Caco-2 (cell line): ENCODE measurements at regions of chr4 and their contacts with region 1.

Region 1: GRCh38 chr4:120922381-120923206 is at the start of gene PRDM5:
- DNase-seq: peak; percentile 66 to 73
- H3K4me3 ChIP-seq: peak within 1 kb of the TSS; percentile 81
- H3K4me3 Mint-ChIP-seq: peak within 1 kb of the TSS; percentile 80
- H3K27ac Mint-ChIP-seq: peak within 1 kb of the TSS; percentile 80
- H3K4me1 ChIP-seq: peaks cover 3% of the 10 kb centered on the region; the same call in 1 of the 2 replicates
- H3K4me1 Mint-ChIP-seq: no peaks in the 10 kb centered on the region
- H3K27me3 ChIP-seq: no peaks in the 10 kb centered on the region
- H3K27me3 Mint-ChIP-seq: no peaks in the 10 kb centered on the region
- CTCF ChIP-seq: peak in 1 of 2 experiments; percentile 23
- total RNA-seq, gene PRDM5: 13.0 and 14.3 TPM in 2 replicates

Region 2: DNA sequence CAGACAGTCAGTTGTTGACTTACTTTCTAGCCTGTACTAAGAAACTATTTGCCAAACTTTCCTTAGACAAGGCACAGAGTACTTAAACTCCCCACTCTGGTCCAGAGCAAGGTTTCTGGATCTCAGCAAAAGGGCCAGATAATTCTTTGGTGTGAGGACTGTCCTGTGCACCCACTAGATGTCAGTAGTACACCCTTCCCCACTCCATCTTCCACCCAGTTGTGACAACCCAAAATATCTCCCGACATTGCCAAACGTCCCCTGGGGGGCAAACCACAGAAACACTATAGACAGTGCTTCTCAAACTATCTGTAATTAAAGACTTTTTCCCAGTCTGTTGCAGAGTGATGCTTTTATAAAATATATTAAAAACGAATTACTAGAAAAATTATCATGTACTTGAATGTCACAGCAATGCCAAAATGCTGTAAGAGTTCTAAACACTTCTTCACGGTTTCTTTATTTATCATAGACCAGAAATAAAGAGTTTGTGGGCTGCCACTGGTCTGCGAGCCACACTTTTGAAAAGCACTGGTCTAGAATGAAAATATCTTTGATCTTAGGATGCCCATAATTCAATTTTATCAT is 203.5 kb before region 1 on chr4:
- CTCF ChIA-PET with region 1: no interaction called
- POLR2A ChIA-PET with region 1: no interaction called
- intact Hi-C with region 1: loop called (anchors 1 kb)
- DNase-seq: peak in 1 of 2 experiments; percentile 46
- H3K4me3 ChIP-seq: no peak overlapping the region
- H3K4me3 Mint-ChIP-seq: no peak overlapping the region
- H3K27ac Mint-ChIP-seq: no peak overlapping the region
- H3K4me1 ChIP-seq: no peaks in the 10 kb centered on the region
- H3K4me1 Mint-ChIP-seq: peaks cover 19% of the 10 kb centered on the region
- H3K27me3 ChIP-seq: no peaks in the 10 kb centered on the region
- H3K27me3 Mint-ChIP-seq: no peaks in the 10 kb centered on the region
- CTCF ChIP-seq: peak; percentile 61 to 73

Region 3: DNA sequence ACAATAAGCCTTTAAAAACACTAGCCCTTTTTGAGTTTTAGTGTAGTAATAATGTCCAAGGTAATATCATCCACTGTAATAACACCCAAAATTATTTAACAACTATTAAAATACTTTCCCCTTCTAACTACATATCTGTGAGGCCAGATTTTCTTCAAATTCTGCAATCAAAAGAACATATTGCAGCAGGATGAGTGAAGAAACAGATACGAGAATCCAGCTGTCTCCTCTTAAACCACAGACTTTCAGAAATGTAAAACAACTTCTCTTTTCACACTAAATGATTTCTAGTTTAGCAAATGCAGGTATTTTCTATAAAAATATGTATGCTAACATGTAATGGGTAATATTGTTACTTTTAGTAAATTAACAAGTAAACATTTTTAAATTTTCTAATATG is 149.0 kb before region 1 on chr4:
- CTCF ChIA-PET with region 1: no interaction called
- POLR2A ChIA-PET with region 1: no interaction called
- intact Hi-C with region 1: no loop called
- DNase-seq: no peak
- H3K4me3 ChIP-seq: no peak overlapping the region
- H3K4me3 Mint-ChIP-seq: no peak overlapping the region
- H3K27ac Mint-ChIP-seq: no peak overlapping the region
- H3K4me1 ChIP-seq: no peaks in the 10 kb centered on the region
- H3K4me1 Mint-ChIP-seq: peaks cover 6% of the 10 kb centered on the region
- H3K27me3 ChIP-seq: no peaks in the 10 kb centered on the region
- H3K27me3 Mint-ChIP-seq: no peaks in the 10 kb centered on the region
- CTCF ChIP-seq: no peak

Region 4: DNA sequence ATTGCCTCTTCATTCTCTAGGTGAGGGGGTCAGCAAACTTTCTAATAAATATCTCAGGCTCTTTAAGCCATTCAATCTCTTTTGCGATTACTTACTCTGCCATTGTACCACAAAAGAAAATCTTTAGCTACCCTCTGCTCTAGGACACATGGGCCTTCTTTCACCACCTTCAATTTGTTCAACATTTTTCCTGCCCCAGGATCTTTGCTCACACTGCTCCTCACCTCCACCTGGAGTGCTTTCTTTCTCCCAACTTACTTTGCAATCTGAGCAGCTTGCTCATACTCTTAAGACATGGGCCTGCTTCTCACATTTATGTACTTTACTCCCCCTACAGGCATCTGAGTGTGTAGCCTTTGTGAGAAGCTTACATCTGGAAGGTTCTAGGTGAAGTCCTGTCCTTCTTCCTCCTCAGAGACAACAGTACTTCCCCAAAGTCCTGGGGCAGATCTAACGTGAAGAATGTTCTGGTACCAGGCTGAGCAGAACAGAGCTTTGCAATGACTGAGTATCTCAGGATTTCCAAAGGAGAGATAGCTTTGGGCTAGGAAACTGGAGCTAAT is 54.9 kb after region 1 on chr4:
- CTCF ChIA-PET with region 1: no interaction called
- POLR2A ChIA-PET with region 1: no interaction called
- intact Hi-C with region 1: loop called (anchors 2 kb)
- DNase-seq: peak; percentile 39 to 46
- H3K4me3 ChIP-seq: no peak overlapping the region
- H3K4me3 Mint-ChIP-seq: no peak overlapping the region
- H3K27ac Mint-ChIP-seq: no peak overlapping the region
- H3K4me1 ChIP-seq: no peaks in the 10 kb centered on the region
- H3K4me1 Mint-ChIP-seq: no peaks in the 10 kb centered on the region
- H3K27me3 ChIP-seq: no peaks in the 10 kb centered on the region
- H3K27me3 Mint-ChIP-seq: no peaks in the 10 kb centered on the region
- CTCF ChIP-seq: peak; percentile 45 to 62

Region 5: DNA sequence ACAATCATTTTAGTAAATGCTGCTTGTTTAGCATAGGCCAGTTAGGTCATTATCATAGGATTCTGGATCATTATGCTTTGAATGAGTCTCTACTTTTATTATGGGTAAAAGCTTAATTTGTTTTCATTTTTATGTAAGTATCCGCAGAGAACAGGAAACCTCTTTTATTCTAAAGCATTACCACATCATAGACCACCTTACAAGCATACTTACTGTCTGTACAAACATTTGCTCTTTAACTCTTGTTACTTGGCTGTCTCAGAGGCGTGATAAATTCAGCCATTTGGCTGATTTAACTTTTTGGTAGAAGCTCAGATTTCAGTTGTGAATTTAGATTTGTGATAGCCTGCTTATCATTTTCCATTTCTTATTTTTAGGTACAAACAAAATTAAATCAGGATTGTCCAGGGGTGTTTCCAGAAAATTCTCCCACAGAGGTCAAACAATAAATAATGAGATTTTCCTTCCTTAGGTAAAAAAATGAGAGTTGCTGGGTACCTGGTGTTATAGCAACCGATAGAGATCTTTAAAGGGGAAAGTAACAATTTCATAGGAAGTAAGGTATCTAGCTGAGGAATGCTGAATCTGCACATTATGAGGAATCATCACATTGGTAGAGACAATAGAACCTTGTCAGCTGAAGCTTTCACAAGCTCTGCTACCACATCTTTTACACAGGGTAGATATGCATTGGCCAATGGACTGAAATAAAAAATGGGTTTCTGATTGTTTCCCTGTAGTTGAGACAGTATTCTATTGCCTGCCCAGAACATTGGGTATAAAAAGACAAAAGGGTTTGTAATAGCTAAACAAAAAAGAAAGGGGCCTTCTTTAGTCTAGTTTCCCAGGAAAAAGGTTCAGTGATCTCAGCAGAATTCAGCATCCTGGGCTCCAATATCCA is 87.2 kb after region 1 on chr4:
- CTCF ChIA-PET with region 1: no interaction called
- POLR2A ChIA-PET with region 1: no interaction called
- intact Hi-C with region 1: loop called (anchors 5 kb)
- DNase-seq: no peak
- H3K4me3 ChIP-seq: no peak overlapping the region
- H3K4me3 Mint-ChIP-seq: no peak overlapping the region
- H3K27ac Mint-ChIP-seq: no peak overlapping the region
- H3K4me1 ChIP-seq: peaks cover 6% of the 10 kb centered on the region; the same call in 1 of the 2 replicates
- H3K4me1 Mint-ChIP-seq: peaks cover 12% of the 10 kb centered on the region
- H3K27me3 ChIP-seq: no peaks in the 10 kb centered on the region
- H3K27me3 Mint-ChIP-seq: no peaks in the 10 kb centered on the region
- CTCF ChIP-seq: no peak

Region 6: GRCh38 chr4:121050300-121050699 is 127.7 kb after region 1 on chr4:
- CTCF ChIA-PET with region 1: no interaction called
- POLR2A ChIA-PET with region 1: no interaction called
- intact Hi-C with region 1: loop called (anchors 1 kb)
- DNase-seq: no peak
- H3K4me3 ChIP-seq: no peak overlapping the region
- H3K4me3 Mint-ChIP-seq: no peak overlapping the region
- H3K27ac Mint-ChIP-seq: no peak overlapping the region
- H3K4me1 ChIP-seq: no peaks in the 10 kb centered on the region; the same call in none of the 2 replicates
- H3K4me1 Mint-ChIP-seq: no peaks in the 10 kb centered on the region
- H3K27me3 ChIP-seq: no peaks in the 10 kb centered on the region
- H3K27me3 Mint-ChIP-seq: no peaks in the 10 kb centered on the region
- CTCF ChIP-seq: peak in 1 of 2 experiments; percentile 10

Region 7: DNA sequence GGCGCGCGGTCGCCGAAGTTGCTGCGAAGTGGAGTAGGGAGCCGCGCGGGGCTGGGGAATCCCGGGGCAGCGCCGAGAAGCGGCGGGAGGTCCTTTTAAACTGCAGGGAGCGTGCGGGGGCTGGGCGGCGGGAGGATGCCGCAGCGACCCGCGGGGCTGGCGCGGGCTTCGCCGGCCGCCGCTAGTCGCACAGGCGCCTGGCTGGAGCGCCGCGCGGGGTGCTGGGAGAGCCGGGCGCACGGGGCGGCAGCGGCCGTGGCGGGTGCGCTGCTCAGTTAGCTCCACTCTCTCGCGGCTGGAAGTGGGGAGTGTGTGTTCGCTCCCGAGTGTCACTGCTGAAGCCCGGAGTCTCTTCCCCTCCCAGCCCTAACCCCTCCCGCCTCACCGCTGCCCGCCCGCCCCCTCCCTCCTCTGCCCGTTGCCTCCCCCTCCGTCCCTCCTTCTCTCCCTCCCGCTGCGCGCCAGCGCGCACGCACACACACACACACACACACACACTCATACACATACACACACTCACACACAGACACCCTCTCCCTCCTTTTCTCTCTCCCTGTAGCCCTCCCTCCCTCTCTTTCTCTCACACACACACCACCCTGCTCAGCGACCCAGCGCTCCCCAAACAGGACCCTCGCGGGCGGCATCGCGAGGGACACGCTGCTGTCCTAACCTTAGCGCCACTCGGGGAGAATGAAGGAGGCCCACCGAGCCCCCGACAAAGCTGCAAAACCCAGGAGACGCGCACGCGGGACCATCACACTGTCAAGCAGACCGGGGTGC is 149.8 kb after region 1 on chr4 and contains the start of gene NDNF:
- CTCF ChIA-PET with region 1: no interaction called
- POLR2A ChIA-PET with region 1: no interaction called
- intact Hi-C with region 1: loop called (anchors 2 kb)
- DNase-seq: peak; percentile 33 to 48
- H3K4me3 ChIP-seq: peak within 1 kb of the TSS; percentile 52
- H3K4me3 Mint-ChIP-seq: peak within 1 kb of the TSS; percentile 89
- H3K27ac Mint-ChIP-seq: no peak within 1 kb of the TSS
- H3K4me1 ChIP-seq: peaks cover 6% of the 10 kb centered on the region; the same call in 1 of the 2 replicates
- H3K4me1 Mint-ChIP-seq: peaks cover 30% of the 10 kb centered on the region
- H3K27me3 ChIP-seq: peaks cover 1% of the 10 kb centered on the region; the same call in 1 of the 2 replicates
- H3K27me3 Mint-ChIP-seq: peaks cover 30% of the 10 kb centered on the region
- CTCF ChIP-seq: no peak
- total RNA-seq, gene NDNF: 3.4 and 3.7 TPM in 2 replicates